Heart right ventricle (tissue), 16 donors: ENCODE measurements at regions of chr21 and their contacts with region 1.

Region 1: GRCh38 chr21:34061983-34062382 is 11.4 kb upstream of the MRPS6 start:
- DNase-seq: no peak
- ATAC-seq: no peak
- H3K4me3 ChIP-seq: no peak overlapping the region
- H3K27ac ChIP-seq: no peak overlapping the region
- H3K4me1 ChIP-seq: no peaks in the 10 kb centered on the region
- H3K27me3 ChIP-seq: no peaks in the 10 kb centered on the region
- CTCF ChIP-seq: no peak

Region 2: DNA sequence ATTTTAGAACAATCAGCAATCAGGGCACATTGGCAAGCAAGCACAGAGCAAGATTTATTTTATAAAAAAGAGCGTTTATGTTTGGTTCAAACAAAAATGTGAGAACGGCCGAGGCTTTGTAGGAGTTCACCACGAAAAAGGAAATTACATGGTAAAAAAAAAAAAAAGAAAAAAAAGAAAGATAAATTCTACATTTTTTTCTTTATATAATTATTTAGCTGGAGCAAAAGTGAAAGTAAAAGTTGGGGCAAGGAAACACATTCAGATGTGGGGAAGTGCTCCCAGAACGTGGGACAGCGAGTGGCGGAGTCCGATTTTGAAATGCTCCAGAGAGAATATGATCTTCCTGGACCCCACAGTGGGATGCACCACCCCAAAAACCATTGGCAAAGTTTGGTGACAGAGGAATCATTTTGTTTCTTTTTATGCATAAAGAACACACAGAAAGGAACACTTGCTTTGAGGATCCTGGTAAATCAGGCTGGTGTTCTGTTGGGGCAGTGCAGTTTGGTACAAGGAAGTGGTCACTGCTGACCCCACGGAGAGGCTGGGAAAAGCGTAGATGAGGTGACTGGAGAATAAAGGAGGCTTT is 130.1 kb before region 1 on chr21:
- intact Hi-C with region 1: loop called in 2 of 10 experiments (anchors 5 to 10 kb)
- DNase-seq: no peak
- ATAC-seq: peak in 7 of 8 donors; percentile 44 to 78 (median 64)
- H3K4me3 ChIP-seq: peak overlapping the region in 9 of 10 donors; percentile 16 to 57 (median 45)
- H3K27ac ChIP-seq: peak overlapping the region in 6 of 10 donors; percentile 17 to 90 (median 48)
- H3K4me1 ChIP-seq: peaks cover 0 to 20% (median 8%) of the 10 kb centered on the region in 9 donors
- H3K27me3 ChIP-seq: no peaks in the 10 kb centered on the region
- CTCF ChIP-seq: no peak

Region 3: DNA sequence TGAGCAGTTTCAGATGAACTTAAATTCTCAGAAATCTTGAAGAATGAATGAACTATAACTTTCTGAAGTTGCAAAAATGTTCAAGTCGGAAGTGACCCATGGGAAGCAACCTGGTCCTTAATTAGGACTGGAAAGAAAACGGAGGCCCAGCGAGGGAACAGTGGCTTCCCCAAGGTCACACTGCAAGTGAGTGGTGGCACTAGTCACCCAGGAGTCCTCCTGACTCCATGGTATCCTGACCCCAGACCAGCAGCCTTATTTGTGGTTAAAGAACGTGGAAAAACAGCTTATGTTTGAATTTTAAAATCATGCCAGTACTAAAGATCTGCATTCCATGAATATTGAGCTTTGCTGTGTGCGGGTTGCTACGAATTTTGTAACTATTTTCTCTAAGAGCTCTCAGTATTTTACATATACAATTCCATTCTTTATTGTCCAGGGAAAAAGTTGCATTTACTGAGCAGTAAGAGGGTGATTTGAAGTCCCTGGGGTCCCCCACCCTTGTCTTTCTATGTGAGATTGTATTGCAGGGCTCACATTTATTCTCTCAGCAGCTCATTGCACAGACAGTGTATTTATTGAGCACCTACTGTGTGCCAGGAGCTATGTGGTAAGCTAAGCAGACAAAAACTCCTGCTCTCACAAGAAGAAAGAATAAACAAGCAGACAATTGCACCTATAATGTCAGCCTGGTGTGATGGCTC is 84.8 kb before region 1 on chr21:
- intact Hi-C with region 1: no loop called
- DNase-seq: no peak
- ATAC-seq: peak in 2 of 8 donors; percentile 27 to 46
- H3K4me3 ChIP-seq: no peak overlapping the region
- H3K27ac ChIP-seq: peak overlapping the region in 7 of 10 donors; percentile 28 to 91 (median 81)
- H3K4me1 ChIP-seq: peaks cover 0 to 40% (median 10%) of the 10 kb centered on the region in 9 donors
- H3K27me3 ChIP-seq: no peaks in the 10 kb centered on the region
- CTCF ChIP-seq: no peak

Region 4: DNA sequence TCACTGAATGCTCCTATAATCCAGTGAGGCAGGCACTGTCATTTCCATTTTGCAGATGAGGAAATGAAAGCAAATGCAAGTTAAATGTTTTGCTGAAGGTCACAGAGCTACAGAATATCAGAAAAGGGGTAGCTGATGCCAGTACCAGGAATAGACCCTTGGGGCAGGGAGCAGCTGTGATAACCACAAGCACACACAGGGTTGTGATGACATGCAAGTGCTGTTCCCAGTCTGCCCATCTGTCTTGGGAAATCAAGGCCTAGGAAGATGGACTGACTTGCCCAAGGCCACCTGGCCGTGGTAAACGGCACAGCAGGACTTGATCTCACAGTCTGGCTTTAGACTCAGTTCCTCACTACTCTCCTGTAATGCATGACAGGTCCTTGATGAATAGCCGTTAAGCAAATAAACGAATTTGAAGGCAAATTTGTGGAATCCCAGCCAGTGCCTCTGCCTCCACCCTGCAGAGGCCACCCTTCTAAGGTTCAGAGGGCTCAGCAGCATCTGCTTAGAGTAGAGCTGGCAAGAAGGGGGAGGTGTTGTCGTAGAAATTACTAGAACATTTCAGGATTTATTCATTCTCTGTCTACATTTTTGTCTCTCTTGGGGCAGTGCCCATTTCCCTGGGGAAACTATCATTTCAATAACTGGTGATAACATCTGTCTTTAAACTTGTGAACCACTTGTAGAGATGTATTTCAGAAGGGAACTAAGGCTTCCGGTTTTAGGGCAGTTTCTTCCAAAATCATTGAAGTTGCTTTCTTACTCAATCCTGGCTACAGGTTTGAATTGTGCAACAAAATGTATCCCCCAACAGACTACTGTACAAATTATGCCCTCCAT is 41.8 kb before region 1 on chr21:
- intact Hi-C with region 1: no loop called
- DNase-seq: no peak
- ATAC-seq: peak in 6 of 8 donors; percentile 29 to 81 (median 60)
- H3K4me3 ChIP-seq: no peak overlapping the region
- H3K27ac ChIP-seq: peak overlapping the region in 1 of 10 donors; percentile 48
- H3K4me1 ChIP-seq: peaks cover 0 to 59% (median 3%) of the 10 kb centered on the region in 9 donors
- H3K27me3 ChIP-seq: no peaks in the 10 kb centered on the region
- CTCF ChIP-seq: no peak